ENCODE measurements at regions of chr9 and their contacts with region 1.

Region 1: GRCh38 chr9:128034821-128035764 is 32.0 kb downstream of the NAIF1 start:
- DNase-seq: peak; percentile 82
- H3K4me3 ChIP-seq: no peak overlapping the region
- H3K27ac ChIP-seq: no peak overlapping the region
- H3K4me1 ChIP-seq: no peaks in the 10 kb centered on the region
- H3K27me3 ChIP-seq: no peaks in the 10 kb centered on the region
- CTCF ChIP-seq: peak; percentile 86

Region 2: DNA sequence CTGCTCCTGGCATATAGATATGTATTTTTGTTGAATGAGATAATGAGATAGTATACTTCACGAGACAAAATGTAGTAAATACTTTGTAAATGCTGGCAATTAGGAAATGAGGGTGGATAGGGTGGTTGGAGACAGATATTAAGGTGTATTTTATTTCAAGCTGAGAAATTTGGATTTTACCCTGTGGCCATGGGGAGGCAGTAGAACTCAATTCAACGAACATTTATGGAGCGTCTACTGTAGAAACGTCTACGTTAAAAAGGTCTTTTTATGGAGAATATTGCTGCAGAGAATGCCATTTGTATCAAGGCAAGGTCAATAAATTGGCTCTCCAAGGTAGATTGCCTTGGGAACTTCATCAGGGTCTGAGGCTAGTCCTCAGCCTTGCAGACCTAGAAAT is 1142.0 kb before region 1 on chr9:
- CTCF ChIA-PET with region 1: no interaction called
- POLR2A ChIA-PET with region 1: no interaction called
- intact Hi-C with region 1: no loop called
- DNase-seq: peak; percentile 32
- H3K4me3 ChIP-seq: no peak overlapping the region
- H3K27ac ChIP-seq: no peak overlapping the region
- H3K4me1 ChIP-seq: no peaks in the 10 kb centered on the region
- H3K27me3 ChIP-seq: no peaks in the 10 kb centered on the region
- CTCF ChIP-seq: peak; percentile 61

Region 3: GRCh38 chr9:127943731-127944144 is 91.4 kb before region 1 on chr9:
- CTCF ChIA-PET with region 1: interaction called, 22 read pairs
- POLR2A ChIA-PET with region 1: no interaction called
- intact Hi-C with region 1: loop called (anchors 1 kb)
- DNase-seq: peak; percentile 88
- H3K4me3 ChIP-seq: no peak overlapping the region
- H3K27ac ChIP-seq: no peak overlapping the region
- H3K4me1 ChIP-seq: peaks cover 7% of the 10 kb centered on the region
- H3K27me3 ChIP-seq: no peaks in the 10 kb centered on the region
- CTCF ChIP-seq: peak; percentile 94

Measured in A673 (cell line).